HEK293 (cell line): ENCODE measurements at regions of chr1 and their contacts with region 1.

Region 1: GRCh38 chr1:153990468-153991150 is at the start of gene RPS27:
- H3K4me3 ChIP-seq: peak within 1 kb of the TSS; percentile 93
- H3K27ac ChIP-seq: peak within 1 kb of the TSS; percentile 67
- H3K4me1 ChIP-seq: peaks cover 3% of the 10 kb centered on the region; the same call in 1 of the 2 replicates
- CTCF ChIP-seq: no peak

Region 2: DNA sequence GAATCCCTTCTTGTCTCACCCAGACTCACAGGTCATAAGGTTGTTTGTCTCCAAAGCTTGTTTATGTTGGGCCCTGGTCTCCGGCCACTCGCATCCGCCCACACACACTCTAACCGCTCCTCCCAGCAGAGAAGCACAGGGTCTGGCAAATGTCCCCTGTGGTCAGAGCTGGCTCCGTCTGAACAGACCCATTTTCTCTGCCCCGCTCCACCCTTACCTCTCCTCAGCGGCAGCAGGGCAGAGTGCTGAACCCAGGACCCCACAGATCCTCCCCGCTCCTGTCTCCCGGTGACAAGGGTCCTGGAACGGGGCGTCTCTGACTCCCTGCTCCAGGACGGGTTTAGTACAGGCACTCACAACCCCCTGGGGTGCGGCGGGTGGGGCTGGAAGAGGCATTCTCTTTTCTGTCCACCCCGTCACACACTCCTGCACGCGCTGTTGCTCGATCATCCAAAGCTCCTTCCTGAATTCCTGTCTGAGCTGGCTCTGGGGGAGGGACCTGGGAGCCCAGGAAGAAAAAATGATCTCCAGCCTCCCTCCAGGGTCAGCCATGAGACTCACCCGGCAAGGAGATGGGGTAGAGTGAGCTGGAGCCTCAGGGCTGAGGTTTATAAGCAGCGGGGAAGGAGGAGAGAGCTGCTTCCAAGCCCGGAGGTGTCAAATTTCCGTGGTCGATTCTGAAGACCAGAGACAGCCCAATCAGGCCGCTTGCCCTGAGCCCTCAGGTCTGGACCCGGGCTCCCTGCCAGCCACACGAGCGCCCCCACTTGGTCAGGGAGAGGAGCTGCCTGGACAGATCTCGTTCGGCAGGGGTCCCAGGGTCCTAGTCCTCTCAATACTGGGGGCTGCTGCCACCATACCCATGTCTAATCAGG is 363.4 kb before region 1 on chr1 and contains the start of gene S100A13:
- CTCF ChIA-PET with region 1: no interaction called
- POLR2A ChIA-PET with region 1: interaction called, 10 read pairs
- H3K4me3 ChIP-seq: peak within 1 kb of the TSS; percentile 55
- H3K27ac ChIP-seq: peak within 1 kb of the TSS; percentile 61
- H3K4me1 ChIP-seq: 0 out of 2 replicates have a peak, but pooled peaks cover 3% of the 10 kb centered on the region
- CTCF ChIP-seq: peak; percentile 89

Region 3: GRCh38 chr1:153783233-153784190 is 207.1 kb before region 1 on chr1:
- CTCF ChIA-PET with region 1: no interaction called
- POLR2A ChIA-PET with region 1: interaction called, 10 read pairs
- H3K4me3 ChIP-seq: peak overlapping the region; percentile 68
- H3K27ac ChIP-seq: peak overlapping the region; percentile 67
- H3K4me1 ChIP-seq: no peaks in the 10 kb centered on the region
- CTCF ChIP-seq: peak; percentile 61

Region 4: GRCh38 chr1:153816283-153816889 is 174.2 kb before region 1 on chr1:
- CTCF ChIA-PET with region 1: interaction called, 30 read pairs
- POLR2A ChIA-PET with region 1: interaction called, 5 read pairs
- H3K4me3 ChIP-seq: no peak overlapping the region
- H3K27ac ChIP-seq: no peak overlapping the region
- H3K4me1 ChIP-seq: no peaks in the 10 kb centered on the region
- CTCF ChIP-seq: no peak

Region 5: DNA sequence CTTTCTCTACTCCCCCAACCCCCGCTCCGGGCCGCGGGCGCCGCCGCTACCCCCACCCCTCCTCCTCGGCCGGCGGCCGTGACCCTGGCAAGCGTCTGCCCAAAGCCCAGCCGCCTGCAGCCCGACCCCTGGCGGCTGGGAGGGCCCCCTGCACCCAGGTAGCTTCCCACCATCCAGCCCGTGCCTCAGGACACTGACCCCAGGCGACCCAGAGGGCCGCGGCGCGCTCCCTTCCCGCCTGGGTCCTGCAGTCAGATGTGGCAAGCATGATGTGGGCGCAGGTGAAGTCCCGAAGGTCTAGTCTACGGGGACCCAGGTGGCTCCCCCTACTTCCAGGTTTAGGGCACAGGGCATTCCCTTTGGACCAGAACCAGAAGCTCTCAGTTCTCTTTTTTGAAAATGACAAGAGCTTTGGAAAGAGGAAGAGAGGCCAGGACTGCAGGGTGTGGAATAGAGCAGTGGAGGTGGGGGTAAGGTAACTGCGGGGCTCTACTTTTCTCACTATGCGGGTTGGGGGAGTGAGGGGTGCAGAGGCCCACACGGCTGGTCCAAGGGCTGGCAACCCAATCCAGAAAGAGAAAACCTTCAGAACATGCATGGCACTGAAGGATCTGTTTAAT is 43.9 kb before region 1 on chr1 and contains the start of gene DENND4B:
- CTCF ChIA-PET with region 1: interaction called, 10 read pairs
- POLR2A ChIA-PET with region 1: interaction called, 13 read pairs
- H3K4me3 ChIP-seq: peak within 1 kb of the TSS; percentile 74
- H3K27ac ChIP-seq: peak within 1 kb of the TSS; percentile 91
- H3K4me1 ChIP-seq: no peaks in the 10 kb centered on the region
- CTCF ChIP-seq: peak; percentile 92

Region 6: DNA sequence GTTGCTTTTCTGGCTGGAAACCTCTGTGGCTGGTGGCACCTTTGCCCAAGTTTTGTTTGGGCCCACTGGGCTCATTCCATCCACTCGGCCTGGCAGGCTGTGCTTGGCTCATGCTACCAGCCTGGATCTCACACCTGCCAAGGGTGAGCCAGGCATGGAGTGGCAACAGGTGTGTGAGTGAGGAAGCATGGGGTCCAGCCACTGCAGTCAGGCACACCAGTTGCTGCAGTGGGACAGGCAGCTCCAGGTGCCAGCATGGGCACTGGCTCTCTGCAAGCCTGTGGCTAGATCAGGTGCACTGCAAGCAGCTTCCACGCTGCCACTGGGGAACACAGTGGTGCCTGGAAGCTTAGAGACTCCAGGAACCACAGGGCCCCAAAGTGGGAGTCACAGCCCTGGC is 107.3 kb after region 1 on chr1:
- CTCF ChIA-PET with region 1: no interaction called
- POLR2A ChIA-PET with region 1: no interaction called
- H3K4me3 ChIP-seq: no peak overlapping the region
- H3K27ac ChIP-seq: no peak overlapping the region
- H3K4me1 ChIP-seq: no peaks in the 10 kb centered on the region
- CTCF ChIP-seq: no peak

Region 7: GRCh38 chr1:154183045-154183915 is 192.7 kb after region 1 on chr1:
- CTCF ChIA-PET with region 1: interaction called, 3 read pairs
- POLR2A ChIA-PET with region 1: interaction called, 21 read pairs
- H3K4me3 ChIP-seq: peak overlapping the region; percentile 96
- H3K27ac ChIP-seq: peak overlapping the region; percentile 78
- H3K4me1 ChIP-seq: peaks cover 28% of the 10 kb centered on the region
- CTCF ChIP-seq: no peak

Region 8: DNA sequence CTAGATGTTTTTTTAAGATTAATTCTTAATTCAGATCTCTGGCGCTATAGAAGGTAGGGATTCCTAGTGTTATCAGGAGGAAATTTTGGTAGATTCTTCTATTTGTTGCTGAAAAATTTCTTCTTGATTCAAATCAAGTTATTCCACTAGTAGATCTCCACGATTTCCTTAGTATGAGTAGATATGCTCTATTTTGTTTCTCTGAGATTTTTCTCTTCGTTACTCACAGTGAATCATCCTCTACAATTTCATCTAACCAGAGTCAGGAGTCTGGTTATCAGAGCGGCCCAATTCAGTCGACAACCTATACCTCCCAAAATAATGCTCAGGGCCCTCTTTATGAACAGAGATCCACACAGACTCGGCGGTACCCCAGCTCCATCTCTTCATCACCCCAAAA is 263.1 kb after region 1 on chr1:
- CTCF ChIA-PET with region 1: no interaction called
- POLR2A ChIA-PET with region 1: no interaction called
- H3K4me3 ChIP-seq: no peak overlapping the region
- H3K27ac ChIP-seq: no peak overlapping the region
- H3K4me1 ChIP-seq: no peaks in the 10 kb centered on the region
- CTCF ChIP-seq: no peak

Region 9: GRCh38 chr1:154352245-154352580 is 361.6 kb after region 1 on chr1:
- CTCF ChIA-PET with region 1: no interaction called
- POLR2A ChIA-PET with region 1: no interaction called
- H3K4me3 ChIP-seq: no peak overlapping the region
- H3K27ac ChIP-seq: no peak overlapping the region; the same call in 1 of the 2 replicates
- H3K4me1 ChIP-seq: 0 out of 2 replicates have a peak, but pooled peaks cover 3% of the 10 kb centered on the region
- CTCF ChIP-seq: no peak